Dorsolateral prefrontal cortex (tissue), 120 donors: ENCODE measurements at regions of chr22 and their contacts with region 1.

Region 1: GRCh38 chr22:21938071-21938822 is 14.4 kb downstream of the PPM1F start:
- DNase-seq: peak; percentile 89 to 97 (median 92)
- H3K4me3 ChIP-seq: peak overlapping the region; percentile 34 to 76 (median 57)
- H3K27ac ChIP-seq: peak overlapping the region; percentile 55 to 99 (median 95)
- H3K27me3 ChIP-seq: no peaks in the 10 kb centered on the region
- CTCF ChIP-seq: peak; percentile 85 to 100 (median 98)

Region 2: DNA sequence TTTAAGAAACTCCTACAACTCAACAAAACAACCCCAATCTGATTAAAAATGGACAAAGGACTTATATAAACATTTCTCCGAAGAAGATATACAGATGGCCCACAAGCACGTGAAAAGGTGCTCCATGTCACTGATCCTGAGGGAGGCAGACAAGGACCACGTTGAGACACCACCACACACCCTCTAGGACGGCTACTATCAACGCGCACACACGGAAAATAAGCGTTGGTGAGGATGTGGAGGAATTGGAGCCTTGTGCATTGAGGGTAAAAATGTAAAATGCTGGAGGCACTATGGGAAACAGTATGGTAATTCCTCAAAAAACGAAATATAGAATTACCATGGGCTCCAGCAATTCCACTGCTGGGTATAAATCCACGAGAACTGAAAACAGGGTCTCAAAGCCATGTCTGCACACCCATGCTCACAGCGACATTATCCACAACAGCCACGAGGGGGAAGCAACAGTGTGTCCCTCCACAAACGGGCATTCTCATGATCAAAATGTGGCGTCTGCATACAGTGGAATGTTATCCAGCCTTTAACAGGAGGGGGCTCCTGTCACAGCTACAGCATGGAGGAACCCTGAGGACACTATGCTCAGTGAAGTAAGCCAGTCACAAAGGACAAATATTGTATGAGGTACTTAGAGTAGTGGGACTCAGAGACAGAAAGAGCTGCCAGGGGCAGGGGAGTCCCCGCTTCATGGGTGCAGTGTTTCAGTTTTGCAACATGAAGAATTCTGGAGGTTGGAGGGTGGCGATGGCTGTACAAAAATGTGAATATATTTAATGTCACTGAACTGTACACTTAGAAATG is 225.1 kb before region 1 on chr22:
- intact Hi-C with region 1: loop called (anchors 1 kb)
- DNase-seq: peak; percentile 57 to 90 (median 79)
- H3K4me3 ChIP-seq: peak overlapping the region in 44 of 59 donors; percentile 2 to 51 (median 30)
- H3K27ac ChIP-seq: peak overlapping the region in 41 of 59 donors; percentile 7 to 70 (median 47)
- H3K27me3 ChIP-seq: no peaks in the 10 kb centered on the region
- CTCF ChIP-seq: peak; percentile 61 to 96 (median 86)

Region 3: GRCh38 chr22:21735200-21736076 is 202.8 kb before region 1 on chr22 and contains the start of gene YPEL1:
- intact Hi-C with region 1: loop called in 1 of 2 experiments (anchors 1 kb)
- DNase-seq: peak; percentile 92 to 99 (median 96)
- H3K4me3 ChIP-seq: peak within 1 kb of the TSS; percentile 56 to 92 (median 77)
- H3K27ac ChIP-seq: peak within 1 kb of the TSS in 57 of 59 donors; percentile 18 to 91 (median 79)
- H3K27me3 ChIP-seq: no peaks in the 10 kb centered on the region
- CTCF ChIP-seq: peak in 12 of 56 donors; percentile 3 to 50 (median 20)
- total RNA-seq, gene YPEL1: 16.4 to 47.2 (median 29.4) TPM

Region 4: GRCh38 chr22:21791635-21792625 is 146.3 kb before region 1 on chr22:
- intact Hi-C with region 1: loop called in 1 of 2 experiments (anchors 10 kb)
- DNase-seq: no peak
- H3K4me3 ChIP-seq: no peak overlapping the region
- H3K27ac ChIP-seq: peak overlapping the region in 13 of 59 donors; percentile 0 to 44 (median 10)
- H3K27me3 ChIP-seq: no peaks in the 10 kb centered on the region
- CTCF ChIP-seq: no peak

Region 5: DNA sequence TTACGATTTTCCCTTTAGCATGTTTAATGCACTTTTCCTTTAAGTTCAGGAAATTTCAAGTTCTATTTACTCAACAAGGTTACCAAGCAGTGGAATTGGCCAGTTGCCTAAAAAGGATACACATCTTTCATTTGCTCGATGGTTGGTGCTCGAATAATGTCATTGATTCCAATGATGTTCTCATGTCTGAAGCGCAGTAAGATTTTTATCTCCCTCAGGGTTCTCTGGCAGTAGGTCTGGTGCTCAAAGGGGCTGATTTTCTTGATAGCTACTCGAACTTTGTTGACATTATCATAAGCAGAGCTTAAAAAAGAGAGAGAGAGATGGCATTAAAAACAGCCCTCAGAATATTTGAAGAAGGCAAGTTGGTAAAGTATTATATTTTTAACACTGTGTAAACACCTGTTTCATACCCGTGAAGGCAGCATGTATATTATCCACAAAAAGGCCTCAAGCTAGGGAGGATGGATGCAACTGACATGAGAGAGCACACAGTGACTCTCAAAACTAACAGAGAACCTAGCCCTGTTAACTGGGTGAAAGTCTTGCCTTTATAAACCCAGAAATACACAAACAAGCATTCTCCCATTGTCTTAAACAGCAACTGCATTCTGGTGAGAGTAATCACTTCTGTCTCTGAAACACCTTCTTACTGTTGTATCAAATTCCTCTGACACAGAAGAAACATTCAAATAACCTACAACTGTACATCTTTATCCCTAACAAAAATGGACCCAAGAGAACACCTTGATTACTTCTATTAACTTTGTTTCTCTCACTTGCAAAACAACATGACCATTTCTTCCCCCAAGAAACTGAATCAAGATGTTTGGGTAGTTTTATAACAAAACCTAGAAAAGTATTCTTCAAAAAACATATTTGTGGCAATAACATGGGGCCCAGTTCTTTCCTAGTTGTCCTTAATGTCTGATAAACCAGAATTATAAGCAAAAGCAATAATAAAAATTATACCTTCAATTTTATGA is 130.4 kb before region 1 on chr22:
- intact Hi-C with region 1: loop called in 1 of 2 experiments (anchors 10 kb)
- DNase-seq: no peak
- H3K4me3 ChIP-seq: no peak overlapping the region
- H3K27ac ChIP-seq: peak overlapping the region in 2 of 59 donors; percentile 6 to 8
- H3K27me3 ChIP-seq: no peaks in the 10 kb centered on the region
- CTCF ChIP-seq: no peak

Region 6: GRCh38 chr22:21867528-21868266 is 70.5 kb before region 1 on chr22 and contains the start of gene MAPK1:
- intact Hi-C with region 1: loop called (anchors 5 kb)
- DNase-seq: peak; percentile 91 to 98 (median 95)
- H3K4me3 ChIP-seq: peak within 1 kb of the TSS; percentile 54 to 98 (median 89)
- H3K27ac ChIP-seq: peak within 1 kb of the TSS; percentile 16 to 96 (median 88)
- H3K27me3 ChIP-seq: no peaks in the 10 kb centered on the region
- CTCF ChIP-seq: peak in 53 of 56 donors; percentile 30 to 76 (median 56)
- total RNA-seq, gene MAPK1: 207 to 492 (median 330) TPM

Region 7: GRCh38 chr22:21902296-21903087 is 35.8 kb before region 1 on chr22:
- intact Hi-C with region 1: no loop called
- DNase-seq: peak in 1 of 10 donors; percentile 7
- H3K4me3 ChIP-seq: no peak overlapping the region
- H3K27ac ChIP-seq: no peak overlapping the region
- H3K27me3 ChIP-seq: no peaks in the 10 kb centered on the region
- CTCF ChIP-seq: no peak

Region 8: DNA sequence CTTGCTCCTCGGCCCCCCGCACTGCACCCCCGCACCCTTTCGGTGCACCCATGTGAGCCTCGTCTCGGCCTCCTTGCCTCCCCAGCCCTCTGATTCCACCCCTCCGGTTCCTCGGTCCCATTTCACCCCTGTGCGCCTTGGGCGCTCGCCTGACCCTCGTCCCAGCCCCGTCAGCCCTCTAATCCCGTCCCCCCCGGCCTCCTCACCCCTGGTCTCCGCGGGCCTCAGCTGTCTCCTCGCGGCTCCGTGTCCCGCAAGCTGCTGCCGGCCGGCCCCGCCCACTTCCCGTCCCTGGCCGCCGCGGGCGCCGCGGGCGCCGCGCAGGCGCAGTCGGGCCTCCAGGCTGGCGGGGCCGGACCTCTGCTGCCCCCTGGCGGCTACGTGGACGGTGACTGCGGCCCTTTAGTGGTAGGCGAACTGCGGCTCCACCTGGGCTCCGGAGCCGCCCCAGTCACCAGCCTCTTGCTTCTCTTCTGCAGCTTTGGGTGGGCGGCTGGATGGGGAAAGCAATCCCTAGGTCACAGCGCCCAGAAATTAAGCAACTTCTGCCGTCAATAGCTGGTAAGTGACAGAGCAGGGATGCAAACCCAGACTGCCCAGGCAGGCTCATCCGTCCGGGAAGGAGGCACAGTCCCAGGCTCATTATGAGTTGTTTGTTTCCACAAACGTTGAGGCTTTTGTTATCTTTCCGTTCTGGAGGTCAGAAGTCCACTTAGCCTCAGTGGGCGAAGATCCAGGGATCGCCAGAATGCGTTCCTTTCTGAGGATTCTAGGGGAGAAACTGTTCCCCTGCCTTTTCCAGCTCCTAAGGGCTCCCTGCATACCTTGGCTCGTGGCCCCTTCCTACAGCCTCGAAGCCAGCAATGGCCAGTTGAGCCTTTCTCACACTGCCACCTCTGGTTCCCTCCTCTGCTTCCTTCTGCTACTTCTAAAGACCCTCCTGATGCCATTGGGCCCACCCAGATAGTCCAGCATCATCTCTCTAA is 14.6 kb after region 1 on chr22 and contains the start of gene PPM1F:
- intact Hi-C with region 1: loop called (anchors 2 kb)
- DNase-seq: peak; percentile 64 to 91 (median 78)
- H3K4me3 ChIP-seq: peak within 1 kb of the TSS; percentile 44 to 80 (median 68)
- H3K27ac ChIP-seq: peak within 1 kb of the TSS in 25 of 59 donors; percentile 14 to 88 (median 46)
- H3K27me3 ChIP-seq: no peaks in the 10 kb centered on the region
- CTCF ChIP-seq: peak; percentile 64 to 99 (median 88)
- total RNA-seq, gene PPM1F: 22.1 to 52.4 (median 37.5) TPM

Region 9: GRCh38 chr22:22397277-22397870 is 459.1 kb after region 1 on chr22:
- intact Hi-C with region 1: no loop called
- DNase-seq: peak in 4 of 10 donors; percentile 41 to 54 (median 50)
- H3K4me3 ChIP-seq: no peak overlapping the region
- H3K27ac ChIP-seq: peak overlapping the region in 51 of 59 donors; percentile 5 to 87 (median 70)
- H3K27me3 ChIP-seq: no peaks in the 10 kb centered on the region
- CTCF ChIP-seq: peak in 24 of 56 donors; percentile 8 to 42 (median 20)